ENCODE measurements at regions of chr18 and their contacts with region 1.

Region 1: GRCh38 chr18:49486953-49487710 is at the start of gene C18orf32:
- H3K4me3 ChIP-seq: peak within 1 kb of the TSS; percentile 70
- H3K27ac ChIP-seq: peak within 1 kb of the TSS; percentile 88
- H3K4me1 ChIP-seq: peaks cover 22% of the 10 kb centered on the region
- CTCF ChIP-seq: peak; percentile 64

Region 2: DNA sequence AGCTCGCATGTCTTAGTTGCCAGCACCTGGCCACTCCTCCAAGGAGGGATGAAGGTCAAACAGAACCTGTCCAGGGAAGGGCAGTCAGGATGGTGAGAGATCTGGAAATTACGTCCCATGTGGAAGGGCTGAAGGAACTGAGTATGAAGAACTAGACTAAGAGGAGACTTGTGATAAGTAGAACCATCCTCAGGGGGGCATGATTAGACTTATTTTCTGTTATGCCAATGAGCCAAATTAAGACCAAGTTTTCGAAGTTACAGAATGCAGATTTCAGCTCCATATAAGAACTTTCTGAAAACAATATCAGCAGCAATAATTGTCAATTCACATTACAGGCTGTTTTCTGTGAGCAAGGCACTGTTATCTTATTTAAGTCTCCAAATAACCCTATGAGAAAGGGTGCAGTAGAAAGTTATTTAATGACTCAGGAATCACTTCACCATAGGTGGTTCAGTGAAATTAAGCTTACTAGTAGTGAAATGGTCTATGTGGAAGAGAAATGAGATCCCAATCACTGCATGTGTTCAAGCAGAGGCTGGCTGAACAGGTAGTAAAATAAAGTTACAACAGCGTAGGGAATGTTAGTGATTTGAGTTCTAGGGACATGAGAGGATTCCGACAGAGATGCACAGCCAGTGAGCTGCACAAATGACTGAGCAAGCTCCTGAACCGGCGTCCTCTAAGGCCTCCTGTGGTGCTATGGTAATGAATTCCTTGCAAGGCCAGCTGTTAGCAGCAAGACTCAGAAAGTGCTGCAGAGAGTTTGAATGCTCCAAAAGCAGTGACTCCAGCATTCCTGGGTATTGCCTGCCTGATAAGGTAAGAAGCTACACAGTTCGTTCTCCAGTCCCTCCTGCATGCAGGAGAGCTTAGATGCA is 22.2 kb before region 1 on chr18:
- CTCF ChIA-PET with region 1: interaction called, 4 read pairs
- POLR2A ChIA-PET with region 1: interaction called, 41 read pairs
- H3K4me3 ChIP-seq: no peak overlapping the region
- H3K27ac ChIP-seq: no peak overlapping the region
- H3K4me1 ChIP-seq: peaks cover 4% of the 10 kb centered on the region; the same call in 1 of the 2 replicates
- CTCF ChIP-seq: peak; percentile 66; the same call in 1 of the 2 replicates

Measured in HEK293 (cell line).